Posterior vena cava (tissue), 2 donors: ENCODE measurements at regions of chr2 and their contacts with region 1.

Region 1: GRCh38 chr2:232438951-232439757 is 16.8 kb upstream of the ALPI start:
- DNase-seq: peak; percentile 85

Region 2: GRCh38 chr2:231905026-231905425 is 534.1 kb before region 1 on chr2:
- intact Hi-C with region 1: loop called in 1 of 2 experiments (anchors 5 kb)
- DNase-seq: peak; percentile 41